K562 (cell line): ENCODE measurements at regions of chr4 and their contacts with region 1.

Region 1: GRCh38 chr4:48963042-48963679 is 22.9 kb upstream of the CWH43 start:
- DNase-seq: peak; percentile 72 to 86 (median 76)
- ATAC-seq: peak; percentile 93
- H3K4me3 ChIP-seq: no peak overlapping the region
- H3K27ac ChIP-seq: no peak overlapping the region
- H3K4me1 ChIP-seq: no peaks in the 10 kb centered on the region
- H3K27me3 ChIP-seq: no peaks in the 10 kb centered on the region
- CTCF ChIP-seq: peak; percentile 98 to 100 (median 100)
- EP300 ChIP-seq: no peak
- POLR2A ChIP-seq: no peak
- RAD21 ChIP-seq: peak; percentile 95

Region 2: GRCh38 chr4:48445704-48446103 is 517.5 kb before region 1 on chr4:
- CTCF ChIA-PET with region 1: interaction called, 9 read pairs
- POLR2A ChIA-PET with region 1: no interaction called
- in situ Hi-C with region 1: no loop called
- intact Hi-C with region 1: loop called (anchors 2 kb)
- DNase-seq: no peak
- ATAC-seq: no peak
- H3K4me3 ChIP-seq: no peak overlapping the region
- H3K27ac ChIP-seq: no peak overlapping the region
- H3K4me1 ChIP-seq: peaks cover 0 to 2% of the 10 kb centered on the region in 2 experiments; a peak in 3 of 5 replicates
- H3K27me3 ChIP-seq: no peaks in the 10 kb centered on the region
- CTCF ChIP-seq: peak in 2 of 3 experiments; percentile 15 to 66; a peak in 2 of 6 replicates
- EP300 ChIP-seq: no peak
- POLR2A ChIP-seq: no peak
- RAD21 ChIP-seq: peak; percentile 61 to 67

Region 3: DNA sequence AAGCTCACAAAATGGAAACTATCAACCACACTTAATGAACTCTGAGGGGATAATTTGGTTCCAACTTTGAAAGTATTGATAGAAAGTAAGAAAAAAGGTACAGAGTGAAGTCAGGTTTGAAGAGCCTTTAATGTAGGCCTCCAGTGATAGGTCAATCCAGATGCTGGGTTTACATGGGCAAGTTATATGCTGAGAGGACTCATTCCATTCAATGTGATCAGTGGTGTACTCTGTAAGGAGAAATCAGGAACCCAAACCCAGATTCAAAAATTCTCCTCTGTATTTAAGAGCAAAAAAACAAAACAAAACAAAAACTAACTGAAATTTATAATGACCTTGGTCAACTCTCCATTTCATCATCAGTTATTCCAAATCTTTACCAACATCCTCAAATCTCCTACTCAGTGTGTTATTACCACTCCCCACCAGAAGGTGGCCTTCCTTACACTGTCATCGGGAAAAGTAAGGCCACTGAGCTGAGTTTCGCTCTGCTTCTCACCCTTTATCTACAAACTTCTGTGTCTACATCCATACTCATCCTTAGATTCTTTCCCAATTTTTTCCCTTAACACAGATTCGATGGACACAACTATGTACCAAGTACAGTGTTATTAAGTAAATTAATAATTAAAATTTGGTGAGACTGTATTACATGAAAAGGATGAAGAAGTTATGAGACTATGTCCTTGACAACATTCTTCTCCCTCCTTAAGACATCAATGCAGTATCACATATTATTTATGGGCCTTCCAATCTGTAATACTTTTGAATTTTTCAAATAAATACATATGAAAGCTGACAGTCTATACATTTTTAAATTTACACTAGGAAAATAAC is 384.8 kb before region 1 on chr4:
- CTCF ChIA-PET with region 1: interaction called, 55 read pairs
- POLR2A ChIA-PET with region 1: no interaction called
- in situ Hi-C with region 1: loop called (anchors 5 kb)
- intact Hi-C with region 1: loop called (anchors 1 kb)
- DNase-seq: peak; percentile 45 to 77 (median 58)
- ATAC-seq: peak; percentile 94
- H3K4me3 ChIP-seq: no peak overlapping the region
- H3K27ac ChIP-seq: no peak overlapping the region
- H3K4me1 ChIP-seq: no peaks in the 10 kb centered on the region
- H3K27me3 ChIP-seq: no peaks in the 10 kb centered on the region
- CTCF ChIP-seq: peak; percentile 76 to 84 (median 80)
- EP300 ChIP-seq: no peak
- POLR2A ChIP-seq: no peak
- RAD21 ChIP-seq: peak; percentile 91 to 96

Region 4: DNA sequence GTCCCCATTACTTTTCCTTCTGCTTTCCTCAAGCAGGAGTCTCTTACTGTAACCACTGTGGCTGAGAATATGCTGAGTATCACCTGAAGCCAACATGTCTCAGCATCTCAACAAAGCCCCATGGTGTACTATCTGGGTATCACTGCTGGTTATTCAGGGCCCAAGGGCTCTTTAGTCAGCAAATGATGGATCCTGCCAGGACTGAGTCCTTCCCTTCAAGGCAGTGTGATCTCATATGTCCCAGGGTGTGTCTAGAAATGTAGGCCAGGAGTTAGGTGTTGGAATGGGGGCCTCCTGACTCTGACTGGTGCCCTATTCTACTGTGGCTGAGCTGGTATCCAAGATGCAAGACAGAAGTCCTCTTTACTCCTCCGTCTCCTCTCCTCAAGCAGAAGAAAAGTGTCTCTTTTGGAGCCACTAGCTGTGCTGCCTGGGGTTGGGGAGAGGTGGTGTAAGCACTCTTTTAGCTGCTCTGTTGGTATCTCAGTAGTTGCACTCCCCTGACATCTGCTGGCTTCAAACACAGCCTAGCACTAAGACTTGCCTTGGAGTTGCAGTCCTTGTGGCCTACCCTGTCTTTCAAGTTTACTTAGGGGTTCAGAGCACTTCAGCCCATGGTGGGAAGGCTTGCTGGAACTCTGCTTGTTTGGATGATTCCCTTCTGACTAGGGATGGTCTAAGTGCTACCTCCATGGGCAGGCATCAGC is 85.2 kb before region 1 on chr4:
- CTCF ChIA-PET with region 1: no interaction called
- POLR2A ChIA-PET with region 1: no interaction called
- in situ Hi-C with region 1: no loop called
- intact Hi-C with region 1: loop called (anchors 5 kb)
- DNase-seq: no peak
- ATAC-seq: peak; percentile 90
- H3K4me3 ChIP-seq: no peak overlapping the region
- H3K27ac ChIP-seq: no peak overlapping the region
- H3K4me1 ChIP-seq: no peaks in the 10 kb centered on the region
- H3K27me3 ChIP-seq: peaks cover 0 to 8% of the 10 kb centered on the region in 2 experiments; a peak in 1 of 5 replicates
- CTCF ChIP-seq: peak in 2 of 3 experiments; percentile 37 to 41; a peak in 4 of 6 replicates
- EP300 ChIP-seq: no peak
- POLR2A ChIP-seq: no peak
- RAD21 ChIP-seq: peak in 1 of 2 experiments; percentile 47; a peak in 2 of 4 replicates